Transverse colon (tissue), 4 donors: ENCODE measurements at regions of chrX and their contacts with region 1.

Region 1: DNA sequence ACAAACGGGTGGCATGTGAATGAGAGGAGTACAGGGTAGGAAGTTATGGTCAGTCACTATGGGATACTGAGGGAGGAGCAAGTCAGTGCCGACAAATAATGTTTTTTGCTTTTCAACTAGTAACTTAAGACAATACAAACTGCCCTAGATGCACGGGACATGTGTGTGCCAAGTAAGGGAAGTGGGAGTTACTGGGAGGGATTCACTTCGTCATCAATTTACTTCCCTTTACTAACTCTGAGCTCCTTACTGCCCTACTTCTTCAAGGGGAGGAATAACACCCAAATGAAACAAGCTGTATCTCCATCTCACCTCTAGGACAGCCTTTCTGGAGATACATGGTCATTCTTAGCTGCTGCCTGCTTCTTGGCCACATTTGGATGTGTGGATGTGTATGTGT is 97.7 kb downstream of the DGKK start:
- DNase-seq: no peak
- H3K4me3 ChIP-seq: no peak overlapping the region
- H3K27ac ChIP-seq: no peak overlapping the region
- H3K4me1 ChIP-seq: peaks cover 0 to 7% (median 0%) of the 10 kb centered on the region in 4 donors
- H3K27me3 ChIP-seq: no peaks in the 10 kb centered on the region
- CTCF ChIP-seq: no peak
- EP300 ChIP-seq: no peak
- POLR2A ChIP-seq: no peak

Region 2: DNA sequence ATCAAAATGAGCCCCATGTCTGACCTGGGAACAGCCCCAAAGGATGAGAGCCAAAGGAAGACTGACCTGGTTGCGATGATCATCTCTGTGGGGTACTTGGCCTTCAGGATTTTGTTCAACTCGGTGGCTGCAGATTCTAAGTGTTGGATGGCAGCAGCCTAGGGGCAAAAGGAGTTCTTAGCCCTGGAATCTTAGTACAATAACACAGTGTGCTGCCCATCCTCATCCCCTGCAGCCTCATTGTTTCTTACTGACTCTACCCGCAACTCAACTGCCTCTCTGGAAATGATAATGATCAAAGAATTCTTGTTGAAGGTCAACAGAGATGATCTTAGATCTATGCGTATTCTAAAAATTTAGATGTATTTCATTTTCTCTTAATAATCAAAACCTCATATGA is 15.5 kb after region 1 on chrX:
- in situ Hi-C with region 1: no loop called
- intact Hi-C with region 1: loop called (anchors 1 kb)
- DNase-seq: no peak
- H3K4me3 ChIP-seq: no peak overlapping the region
- H3K27ac ChIP-seq: no peak overlapping the region
- H3K4me1 ChIP-seq: no peaks in the 10 kb centered on the region
- H3K27me3 ChIP-seq: no peaks in the 10 kb centered on the region
- CTCF ChIP-seq: no peak
- EP300 ChIP-seq: no peak
- POLR2A ChIP-seq: no peak